BJ (cell line): ENCODE measurements at regions of chr17 and their contacts with region 1.

Region 1: GRCh38 chr17:9291912-9292560 is 270.7 kb downstream of the NTN1 start:
- DNase-seq: no peak
- H3K4me3 ChIP-seq: no peak overlapping the region
- H3K27me3 ChIP-seq: no peaks in the 10 kb centered on the region
- CTCF ChIP-seq: peak; percentile 70

Region 2: GRCh38 chr17:9132944-9133575 is 159.0 kb before region 1 on chr17:
- CTCF ChIA-PET with region 1: no interaction called
- POLR2A ChIA-PET with region 1: interaction called, 11 read pairs
- DNase-seq: no peak
- H3K4me3 ChIP-seq: no peak overlapping the region
- H3K27me3 ChIP-seq: no peaks in the 10 kb centered on the region
- CTCF ChIP-seq: no peak

Region 3: DNA sequence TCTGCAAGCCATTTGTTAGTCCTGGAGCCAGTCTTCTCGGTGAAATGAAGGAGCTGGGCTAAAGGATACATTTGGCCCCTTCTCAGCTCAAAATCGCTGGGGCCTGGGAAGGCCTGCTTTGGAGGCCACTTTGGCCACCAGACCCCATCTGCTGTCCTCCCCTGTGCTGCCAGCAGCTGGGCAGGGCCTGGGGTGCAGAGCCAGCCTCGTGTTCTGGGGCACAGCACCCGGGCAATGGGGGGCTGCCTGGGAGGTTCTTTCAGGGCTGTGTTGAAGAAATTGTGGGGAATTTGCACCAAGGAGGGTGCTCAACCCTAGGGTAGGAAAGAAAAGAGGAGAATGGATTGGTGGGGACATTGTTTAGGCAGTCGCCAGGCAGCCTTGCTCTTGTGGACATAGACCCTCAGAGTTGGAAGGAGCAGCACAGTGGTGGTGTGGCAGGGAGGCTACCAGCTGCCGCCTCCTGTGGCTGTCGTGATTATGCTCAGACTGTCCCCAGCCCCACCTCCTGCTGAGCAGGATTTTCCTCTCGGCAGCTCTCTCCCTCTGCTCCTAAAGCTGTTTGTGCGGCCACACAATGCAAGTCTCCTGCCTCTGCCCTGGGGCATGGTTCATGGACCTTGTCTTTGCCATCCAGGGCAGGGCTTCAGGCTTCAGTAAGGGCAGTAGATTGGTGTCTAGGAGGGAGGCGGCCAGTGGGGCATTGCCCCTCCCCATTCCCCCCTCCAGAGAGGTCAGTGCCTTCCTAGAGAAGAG is 95.9 kb before region 1 on chr17:
- CTCF ChIA-PET with region 1: no interaction called
- POLR2A ChIA-PET with region 1: interaction called, 12 read pairs
- DNase-seq: no peak
- H3K4me3 ChIP-seq: no peak overlapping the region
- H3K27me3 ChIP-seq: no peaks in the 10 kb centered on the region
- CTCF ChIP-seq: no peak

Region 4: GRCh38 chr17:9228408-9229151 is 63.5 kb before region 1 on chr17:
- CTCF ChIA-PET with region 1: no interaction called
- POLR2A ChIA-PET with region 1: no interaction called
- DNase-seq: no peak
- H3K4me3 ChIP-seq: no peak overlapping the region
- H3K27me3 ChIP-seq: no peaks in the 10 kb centered on the region
- CTCF ChIP-seq: 0 out of 2 replicates have a peak, but pooled peaks have one; percentile 11